CD8-positive, alpha-beta memory T cell (primary cell): ENCODE measurements at regions of chr9 and their contacts with region 1.

Region 1: DNA sequence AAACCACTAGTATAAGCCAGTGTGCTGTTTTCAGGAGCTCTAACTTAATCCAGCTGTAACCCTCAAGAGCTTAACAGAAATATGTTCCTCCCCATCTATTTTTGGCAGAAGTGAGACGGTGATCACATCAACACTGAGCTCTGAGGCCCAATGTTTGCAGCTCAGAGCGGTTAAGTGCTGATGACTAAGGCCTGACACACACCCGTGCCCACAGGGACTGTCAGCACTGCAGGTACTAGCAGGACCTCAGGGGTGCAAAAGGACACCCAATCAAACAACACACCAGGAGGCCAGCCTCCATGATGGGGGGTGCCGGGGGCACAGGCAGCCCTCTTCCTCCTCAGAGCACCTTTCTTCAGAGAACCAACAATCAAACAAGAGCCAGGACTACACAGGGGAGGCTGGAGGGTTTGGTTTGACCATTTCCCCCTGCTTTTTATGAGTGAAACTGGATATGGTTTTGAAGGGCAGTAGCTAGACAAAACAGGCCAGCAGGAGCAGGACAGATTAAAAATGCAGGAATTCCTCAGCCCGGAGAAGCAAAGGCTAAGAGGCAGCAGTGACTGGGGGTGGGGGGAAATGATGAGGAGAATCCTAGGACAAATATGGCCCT is 61.3 kb downstream of the RAPGEF1 start:
- DNase-seq: peak in 4 of 5 donors; percentile 53 to 92 (median 66)
- H3K4me3 ChIP-seq: peak overlapping the region; percentile 16
- H3K4me3 Mint-ChIP-seq: peak overlapping the region; percentile 41 to 94 (median 82)
- H3K27ac ChIP-seq: peak overlapping the region; percentile 52
- H3K27ac Mint-ChIP-seq: peak overlapping the region; percentile 89 to 99 (median 96)
- H3K4me1 ChIP-seq: peaks cover 54% of the 10 kb centered on the region
- H3K4me1 Mint-ChIP-seq: peaks cover 77 to 100% (median 99%) of the 10 kb centered on the region in 3 donors
- H3K27me3 ChIP-seq: no peaks in the 10 kb centered on the region
- H3K27me3 Mint-ChIP-seq: no peaks in the 10 kb centered on the region

Region 2: DNA sequence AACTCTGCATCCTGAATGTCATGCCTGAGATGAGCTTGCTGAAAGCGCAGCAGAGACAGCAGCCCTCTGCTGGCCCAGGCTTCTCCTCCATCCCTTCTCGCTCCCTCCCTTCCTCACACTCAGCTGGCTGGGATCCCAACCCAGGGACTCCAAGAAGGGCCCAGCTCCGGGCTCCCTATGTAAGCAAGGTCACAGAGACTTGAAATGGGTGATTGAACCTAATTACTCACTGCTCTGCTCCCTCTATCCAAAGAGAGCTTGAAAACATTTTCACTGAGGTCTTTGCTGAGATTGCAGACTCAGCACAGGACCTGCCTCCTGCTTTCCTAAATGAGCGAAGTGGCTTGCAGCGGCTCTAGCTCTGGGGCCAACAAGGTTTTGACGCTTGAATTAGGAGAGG is 18.5 kb after region 1 on chr9:
- CTCF ChIA-PET with region 1: interaction called, 11 read pairs
- POLR2A ChIA-PET with region 1: interaction called, 4 read pairs
- DNase-seq: no peak
- H3K4me3 ChIP-seq: no peak overlapping the region
- H3K4me3 Mint-ChIP-seq: no peak overlapping the region
- H3K27ac ChIP-seq: no peak overlapping the region
- H3K27ac Mint-ChIP-seq: peak overlapping the region in 1 of 8 donors; percentile 83
- H3K4me1 ChIP-seq: peaks cover 60% of the 10 kb centered on the region
- H3K4me1 Mint-ChIP-seq: peaks cover 85 to 99% (median 98%) of the 10 kb centered on the region in 3 donors
- H3K27me3 ChIP-seq: no peaks in the 10 kb centered on the region
- H3K27me3 Mint-ChIP-seq: no peaks in the 10 kb centered on the region

Region 3: DNA sequence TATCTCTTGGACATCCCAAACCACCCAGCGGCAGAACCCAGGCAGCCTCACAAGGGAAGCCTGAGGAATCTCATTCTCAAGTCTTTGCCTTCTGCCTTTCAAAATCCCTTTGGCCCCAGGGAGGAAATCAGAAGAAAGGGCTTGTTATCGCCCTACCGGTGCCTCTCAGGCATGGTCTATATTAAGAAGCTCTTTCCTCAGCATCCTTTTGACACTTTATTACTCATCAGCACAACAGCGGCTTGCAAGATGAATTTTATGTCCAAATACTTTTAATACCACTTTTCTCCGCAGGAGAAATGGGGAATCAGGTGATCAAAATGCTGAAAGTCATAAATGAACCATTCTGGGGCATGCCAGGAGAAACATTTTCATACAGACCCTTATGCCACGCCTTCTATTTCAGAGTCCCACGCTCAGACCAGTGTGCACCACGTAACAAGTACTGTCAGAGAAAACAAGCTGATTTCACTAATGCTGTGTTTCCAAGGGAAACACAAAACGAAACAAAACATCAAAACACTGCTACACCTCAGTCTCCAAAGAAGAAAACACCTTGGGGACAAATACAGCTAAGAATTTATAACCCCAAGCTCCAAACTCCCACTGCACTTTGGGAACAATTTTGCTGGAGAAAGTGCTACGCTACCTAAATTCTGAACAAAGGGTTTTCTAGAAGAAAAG is 31.3 kb after region 1 on chr9:
- CTCF ChIA-PET with region 1: interaction called, 6 read pairs
- POLR2A ChIA-PET with region 1: interaction called, 12 read pairs
- DNase-seq: peak in 3 of 5 donors; percentile 14 to 71 (median 65)
- H3K4me3 ChIP-seq: peak overlapping the region; percentile 4
- H3K4me3 Mint-ChIP-seq: peak overlapping the region; percentile 25 to 81 (median 51)
- H3K27ac ChIP-seq: peak overlapping the region; percentile 64
- H3K27ac Mint-ChIP-seq: peak overlapping the region; percentile 90 to 99 (median 96)
- H3K4me1 ChIP-seq: peaks cover 61% of the 10 kb centered on the region
- H3K4me1 Mint-ChIP-seq: peaks cover 72 to 95% (median 91%) of the 10 kb centered on the region in 3 donors
- H3K27me3 ChIP-seq: no peaks in the 10 kb centered on the region
- H3K27me3 Mint-ChIP-seq: no peaks in the 10 kb centered on the region

Region 4: DNA sequence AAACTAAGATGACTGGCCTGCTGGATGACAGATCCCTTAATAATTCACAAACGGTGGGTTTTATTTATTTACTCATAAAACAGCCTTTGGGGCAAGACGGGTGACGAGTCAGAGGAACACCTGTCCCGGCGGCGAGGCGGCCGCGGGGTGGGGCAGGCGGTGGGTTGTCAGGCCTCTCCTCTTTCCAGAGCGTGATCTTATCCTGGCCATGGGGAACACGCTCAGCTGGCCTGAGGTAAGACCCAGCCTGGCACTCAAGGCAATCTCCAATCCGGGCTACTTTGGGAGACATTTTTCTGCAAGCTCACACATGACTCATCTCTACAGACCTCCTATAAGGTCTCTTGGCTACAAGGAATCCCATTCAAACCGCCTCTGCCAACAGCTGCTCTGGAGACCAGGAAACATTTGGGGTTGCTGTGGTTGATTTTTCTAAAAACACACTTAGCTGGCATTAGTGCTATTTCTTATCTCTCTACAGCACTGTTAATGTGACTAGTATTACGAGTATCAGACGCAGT is 55.0 kb after region 1 on chr9:
- CTCF ChIA-PET with region 1: interaction called, 49 read pairs
- POLR2A ChIA-PET with region 1: interaction called, 77 read pairs
- DNase-seq: peak in 4 of 5 donors; percentile 33 to 65 (median 44)
- H3K4me3 ChIP-seq: peak overlapping the region; percentile 52
- H3K4me3 Mint-ChIP-seq: peak overlapping the region; percentile 73 to 90 (median 84)
- H3K27ac ChIP-seq: peak overlapping the region; percentile 61
- H3K27ac Mint-ChIP-seq: peak overlapping the region; percentile 78 to 99 (median 92)
- H3K4me1 ChIP-seq: peaks cover 95% of the 10 kb centered on the region
- H3K4me1 Mint-ChIP-seq: peaks cover 86 to 95% (median 93%) of the 10 kb centered on the region in 3 donors
- H3K27me3 ChIP-seq: no peaks in the 10 kb centered on the region
- H3K27me3 Mint-ChIP-seq: no peaks in the 10 kb centered on the region

Region 5: DNA sequence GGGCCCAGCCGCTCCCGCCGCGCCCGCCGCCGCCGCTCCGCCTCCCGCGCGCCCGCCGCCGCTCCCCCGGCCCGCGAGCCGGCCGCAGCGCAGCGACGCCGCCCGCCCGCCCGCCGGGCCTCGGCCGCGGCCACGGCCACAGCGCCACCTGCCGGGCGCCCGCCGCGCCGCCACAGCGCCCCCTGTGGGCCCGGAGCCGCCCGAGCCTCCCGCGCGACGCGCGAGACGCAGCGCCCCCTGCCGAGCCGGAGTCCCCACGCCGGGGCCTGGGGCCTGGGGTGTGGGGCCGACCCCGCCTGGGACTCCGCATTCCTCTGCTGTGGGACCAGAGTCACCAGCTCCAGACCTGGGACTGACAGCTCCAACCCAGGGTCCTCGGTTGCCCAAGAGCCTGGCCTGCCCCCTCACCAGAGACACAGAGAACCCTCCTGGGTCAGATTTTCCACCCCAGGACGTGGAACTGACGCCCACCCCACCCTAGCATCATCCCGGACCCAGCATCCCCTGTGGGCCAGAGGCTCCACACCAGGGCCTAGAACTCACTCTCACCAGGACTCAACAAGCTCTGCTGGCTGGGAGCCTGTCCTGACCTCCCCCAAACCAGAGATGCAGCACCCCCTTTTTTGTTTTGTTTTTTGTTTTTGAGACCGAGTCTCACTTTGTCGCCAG is 61.5 kb after region 1 on chr9 and contains the start of gene RAPGEF1:
- CTCF ChIA-PET with region 1: interaction called, 20 read pairs
- POLR2A ChIA-PET with region 1: interaction called, 11 read pairs
- DNase-seq: peak; percentile 73 to 86 (median 78)
- H3K4me3 ChIP-seq: peak within 1 kb of the TSS; percentile 51
- H3K4me3 Mint-ChIP-seq: peak within 1 kb of the TSS; percentile 90 to 98 (median 94)
- H3K27ac ChIP-seq: peak within 1 kb of the TSS; percentile 33
- H3K27ac Mint-ChIP-seq: peak within 1 kb of the TSS; percentile 81 to 98 (median 94)
- H3K4me1 ChIP-seq: peaks cover 62% of the 10 kb centered on the region
- H3K4me1 Mint-ChIP-seq: peaks cover 50 to 67% (median 61%) of the 10 kb centered on the region in 3 donors
- H3K27me3 ChIP-seq: no peaks in the 10 kb centered on the region
- H3K27me3 Mint-ChIP-seq: peaks cover 0 to 2% of the 10 kb centered on the region in 2 donors
- total RNA-seq, gene RAPGEF1: 145 to 148 TPM